Colonic mucosa (tissue), 4 donors: ENCODE measurements at regions of chr22 and their contacts with region 1.

Region 1: GRCh38 chr22:17057959-17058814 is 26.6 kb upstream of the IL17RA start:
- DNase-seq: peak; percentile 61
- H3K4me3 ChIP-seq: no peak overlapping the region
- H3K27ac ChIP-seq: no peak overlapping the region
- H3K4me1 ChIP-seq: no peaks in the 10 kb centered on the region
- H3K27me3 ChIP-seq: no peaks in the 10 kb centered on the region
- CTCF ChIP-seq: peak; percentile 89

Region 2: DNA sequence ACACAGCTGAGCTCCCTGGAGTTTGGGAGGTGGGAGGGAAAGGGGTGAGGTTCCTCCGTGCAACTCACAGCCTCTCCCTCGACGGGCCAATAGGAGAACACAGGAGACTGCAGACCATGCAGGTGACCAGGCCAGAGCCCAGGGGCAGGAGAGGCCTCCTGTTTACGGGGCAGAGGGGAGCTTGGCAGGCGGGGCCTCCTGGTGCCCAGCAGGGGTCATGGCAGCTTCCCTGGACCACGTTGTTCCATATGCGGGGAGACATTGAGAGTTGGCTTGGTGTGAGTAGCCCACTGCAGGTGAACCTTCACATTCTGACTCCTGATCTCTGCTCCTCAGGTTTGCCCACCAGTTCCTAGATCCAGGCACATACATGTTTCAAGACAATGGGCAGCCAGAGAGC is 213.7 kb before region 1 on chr22:
- intact Hi-C with region 1: no loop called
- DNase-seq: no peak
- H3K4me3 ChIP-seq: no peak overlapping the region
- H3K27ac ChIP-seq: no peak overlapping the region
- H3K4me1 ChIP-seq: no peaks in the 10 kb centered on the region
- H3K27me3 ChIP-seq: no peaks in the 10 kb centered on the region
- CTCF ChIP-seq: no peak

Region 3: DNA sequence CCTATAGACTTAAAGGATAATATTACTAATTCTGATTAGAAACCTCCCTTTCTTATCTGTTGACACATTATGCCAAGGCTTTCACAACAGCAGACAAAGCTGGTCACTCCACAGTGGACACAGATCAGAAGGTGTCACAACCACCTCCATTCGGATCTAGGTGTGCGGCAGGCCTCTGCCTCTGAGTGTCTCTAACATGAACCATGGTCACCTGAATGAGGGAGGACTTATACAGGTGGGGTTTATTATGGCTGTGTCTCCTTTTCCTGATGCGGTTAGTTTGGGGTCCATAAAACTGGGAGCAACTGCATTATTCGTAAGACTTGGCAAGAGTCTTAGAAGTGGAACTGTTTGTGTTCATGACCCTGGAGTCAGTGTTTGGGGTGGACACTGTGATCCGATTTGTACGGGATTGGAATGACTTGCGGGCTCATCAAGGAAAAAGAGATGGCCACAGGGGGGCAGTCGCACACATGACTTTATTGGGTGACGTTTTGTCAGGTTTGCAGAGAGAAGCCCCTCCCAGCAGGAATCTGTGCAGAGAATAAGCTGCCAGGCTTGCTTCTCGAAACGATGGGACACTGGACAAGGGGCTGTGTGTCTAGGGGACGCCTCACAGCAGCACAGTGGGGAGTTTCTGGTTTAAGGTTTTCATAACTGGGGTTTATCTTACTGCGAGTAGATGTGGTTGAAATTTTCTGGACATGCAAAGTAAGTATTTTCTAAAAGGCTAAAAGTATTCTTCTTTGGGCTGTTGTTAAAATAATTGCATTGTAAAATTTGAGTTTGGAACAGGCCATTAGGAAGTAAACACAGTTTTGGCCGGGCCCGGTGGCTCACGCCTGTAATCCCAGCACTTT is 140.8 kb before region 1 on chr22:
- intact Hi-C with region 1: loop called (anchors 10 kb)
- DNase-seq: peak; percentile 50
- H3K4me3 ChIP-seq: no peak overlapping the region
- H3K27ac ChIP-seq: no peak overlapping the region
- H3K4me1 ChIP-seq: no peaks in the 10 kb centered on the region
- H3K27me3 ChIP-seq: no peaks in the 10 kb centered on the region
- CTCF ChIP-seq: peak; percentile 46

Region 4: DNA sequence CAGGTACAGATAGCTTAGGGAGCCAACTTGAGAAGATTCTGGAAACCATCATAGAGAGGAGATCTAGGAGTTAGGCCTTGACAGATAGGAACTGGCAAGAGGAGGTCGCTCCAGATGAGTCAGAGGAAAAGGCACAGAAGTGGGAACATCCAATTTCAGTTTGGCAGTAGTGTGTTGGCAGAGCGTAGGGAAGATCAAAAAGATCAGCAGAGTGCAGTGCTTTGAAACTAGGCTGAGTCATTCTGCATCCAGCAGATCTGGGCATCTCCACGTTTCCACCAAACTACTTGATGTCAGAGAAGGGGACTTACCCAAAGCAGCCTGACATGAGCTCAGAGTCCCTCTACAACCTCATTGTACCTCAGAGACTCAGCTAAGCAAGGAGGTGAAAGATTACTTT is 108.6 kb before region 1 on chr22:
- intact Hi-C with region 1: no loop called
- DNase-seq: no peak
- H3K4me3 ChIP-seq: no peak overlapping the region
- H3K27ac ChIP-seq: no peak overlapping the region
- H3K4me1 ChIP-seq: no peaks in the 10 kb centered on the region
- H3K27me3 ChIP-seq: no peaks in the 10 kb centered on the region
- CTCF ChIP-seq: no peak

Region 5: GRCh38 chr22:17348461-17349113 is 290.4 kb after region 1 on chr22:
- intact Hi-C with region 1: no loop called
- DNase-seq: no peak
- H3K4me3 ChIP-seq: no peak overlapping the region
- H3K27ac ChIP-seq: no peak overlapping the region
- H3K4me1 ChIP-seq: no peaks in the 10 kb centered on the region
- H3K27me3 ChIP-seq: no peaks in the 10 kb centered on the region
- CTCF ChIP-seq: no peak